Right ventricle myocardium superior (tissue), 1 donor: ENCODE measurements at regions of chr1 and their contacts with region 1.

Region 1: GRCh38 chr1:26874896-26875295 is 11.9 kb downstream of the SFN start:
- DNase-seq: no peak
- ATAC-seq: no peak

Region 2: GRCh38 chr1:26811057-26811456 is 63.8 kb before region 1 on chr1:
- intact Hi-C with region 1: loop called (anchors 5 kb)
- DNase-seq: no peak
- ATAC-seq: no peak

Region 3: GRCh38 chr1:26853156-26853555 is 21.7 kb before region 1 on chr1:
- intact Hi-C with region 1: loop called (anchors 1 kb)
- DNase-seq: peak; percentile 86
- ATAC-seq: peak; percentile 82

Region 4: DNA sequence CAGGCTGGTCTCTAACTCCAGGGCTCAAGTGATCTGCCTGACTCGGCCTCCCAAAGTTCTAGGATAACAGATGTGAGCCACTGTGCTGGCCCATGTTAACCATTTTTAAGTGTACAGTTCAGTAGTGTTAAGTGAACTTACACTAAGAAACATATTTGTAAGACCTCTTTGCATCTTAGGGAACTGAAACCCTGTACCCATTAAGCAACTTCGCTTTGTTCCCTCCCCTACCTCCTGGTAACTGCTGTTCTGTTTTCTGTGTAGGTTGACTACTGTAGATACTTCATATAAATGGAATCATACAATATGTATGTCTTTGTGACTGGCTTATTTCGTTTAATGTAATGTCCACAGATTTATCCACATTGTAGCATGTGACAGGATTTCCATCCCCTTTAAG is 57.6 kb after region 1 on chr1:
- intact Hi-C with region 1: no loop called
- DNase-seq: no peak
- ATAC-seq: no peak